GM12878 (cell line): ENCODE measurements at regions of chr14 and their contacts with region 1.

Region 1: DNA sequence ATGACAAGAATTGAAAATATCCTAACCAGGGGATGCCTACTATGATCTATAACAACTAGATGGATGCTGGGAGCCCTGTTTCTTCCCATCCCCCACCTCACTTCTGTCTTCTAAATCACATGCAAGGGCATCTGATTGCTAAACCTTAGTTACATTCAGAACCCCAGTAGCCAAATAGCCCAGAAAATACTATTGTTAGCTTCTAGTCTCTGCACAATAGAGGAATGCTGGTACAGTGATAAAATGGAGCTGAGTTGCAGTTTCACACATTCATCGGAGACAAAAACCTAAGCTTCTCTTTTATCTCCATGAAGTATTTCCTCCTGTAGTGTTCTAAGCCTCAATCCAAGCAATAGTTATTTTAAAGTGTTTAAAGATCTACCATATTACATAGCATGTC is 942.9 kb downstream of the RPS29 start:
- DNase-seq: no peak
- ATAC-seq: no peak
- H3K4me3 ChIP-seq: no peak overlapping the region
- H3K27ac ChIP-seq: no peak overlapping the region
- H3K4me1 ChIP-seq: no peaks in the 10 kb centered on the region
- H3K27me3 ChIP-seq: no peaks in the 10 kb centered on the region
- CTCF ChIP-seq: no peak
- EP300 ChIP-seq: no peak
- POLR2A ChIP-seq: no peak
- RAD21 ChIP-seq: no peak

Region 2: DNA sequence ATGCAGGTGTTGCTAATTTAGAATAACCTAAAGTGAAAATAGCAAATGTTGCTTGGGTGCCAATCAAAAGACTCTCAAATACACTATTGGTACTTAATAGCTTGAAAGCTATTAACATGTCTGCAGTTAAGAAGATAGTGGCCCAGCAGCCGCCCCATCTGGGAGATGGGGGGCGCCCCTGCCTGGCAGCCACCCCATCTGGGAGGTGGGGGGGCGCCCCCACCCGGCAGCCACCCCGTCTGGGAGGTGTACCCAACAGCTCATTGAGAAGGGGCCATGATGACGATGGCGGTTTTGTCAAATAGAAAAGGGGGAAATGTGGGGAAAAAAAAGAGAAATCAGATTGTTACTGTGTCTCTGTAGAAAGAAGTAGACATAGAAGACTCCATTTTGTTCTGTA is 44.8 kb before region 1 on chr14:
- CTCF ChIA-PET with region 1: no interaction called
- POLR2A ChIA-PET with region 1: no interaction called
- RAD21 ChIA-PET with region 1: no interaction called
- SMC1A ChIA-PET with region 1: no interaction called
- in situ Hi-C with region 1: no loop called
- intact Hi-C with region 1: no loop called
- DNase-seq: no peak
- ATAC-seq: no peak
- H3K4me3 ChIP-seq: no peak overlapping the region
- H3K27ac ChIP-seq: no peak overlapping the region
- H3K4me1 ChIP-seq: no peaks in the 10 kb centered on the region
- H3K27me3 ChIP-seq: no peaks in the 10 kb centered on the region
- CTCF ChIP-seq: no peak
- EP300 ChIP-seq: no peak
- POLR2A ChIP-seq: no peak
- RAD21 ChIP-seq: no peak

Region 3: GRCh38 chr14:48628870-48629269 is 14.4 kb before region 1 on chr14:
- CTCF ChIA-PET with region 1: no interaction called
- POLR2A ChIA-PET with region 1: no interaction called
- RAD21 ChIA-PET with region 1: no interaction called
- SMC1A ChIA-PET with region 1: interaction called, 10 read pairs
- in situ Hi-C with region 1: no loop called
- intact Hi-C with region 1: no loop called
- DNase-seq: no peak
- ATAC-seq: peak; percentile 59
- H3K4me3 ChIP-seq: no peak overlapping the region
- H3K27ac ChIP-seq: no peak overlapping the region
- H3K4me1 ChIP-seq: no peaks in the 10 kb centered on the region
- H3K27me3 ChIP-seq: no peaks in the 10 kb centered on the region
- CTCF ChIP-seq: no peak
- EP300 ChIP-seq: no peak
- POLR2A ChIP-seq: no peak
- RAD21 ChIP-seq: no peak

Region 4: DNA sequence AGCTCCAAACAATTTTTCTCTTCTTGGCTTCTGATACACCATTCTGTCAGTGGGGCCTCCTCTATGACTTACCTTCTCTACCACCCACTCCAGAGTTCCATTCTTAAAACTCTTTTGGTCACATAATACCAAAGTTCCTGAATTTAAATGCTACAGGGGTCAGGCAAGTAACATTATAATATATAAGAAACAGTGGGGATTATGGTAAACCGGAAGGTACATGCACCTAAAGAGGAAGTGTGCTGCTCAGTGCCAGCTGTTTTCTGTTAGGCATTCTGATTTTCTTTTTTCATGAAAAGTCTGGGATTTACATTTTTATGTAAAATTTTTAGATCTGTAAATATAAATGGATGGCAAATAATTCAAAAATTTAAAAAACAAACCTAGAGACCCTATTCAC is 1548.3 kb after region 1 on chr14:
- CTCF ChIA-PET with region 1: no interaction called
- POLR2A ChIA-PET with region 1: no interaction called
- RAD21 ChIA-PET with region 1: no interaction called
- SMC1A ChIA-PET with region 1: no interaction called
- in situ Hi-C with region 1: no loop called
- intact Hi-C with region 1: no loop called
- DNase-seq: no peak
- ATAC-seq: no peak
- H3K4me3 ChIP-seq: no peak overlapping the region
- H3K27ac ChIP-seq: no peak overlapping the region
- H3K4me1 ChIP-seq: no peaks in the 10 kb centered on the region
- H3K27me3 ChIP-seq: no peaks in the 10 kb centered on the region
- CTCF ChIP-seq: no peak
- EP300 ChIP-seq: no peak
- POLR2A ChIP-seq: no peak
- RAD21 ChIP-seq: no peak